Activated CD4-positive, alpha-beta T cell treated with anti-CD3 and anti-CD28 coated beads, Interleukin-2, amount 10 ng/mL, durations not matched to agents 24 days and 14 days (primary cell): ENCODE measurements at regions of chr6 and their contacts with region 1.

Region 1: GRCh38 chr6:3277851-3278416 is 19.2 kb downstream of the PSMG4 start:
- DNase-seq: no peak
- H3K4me3 Mint-ChIP-seq: no peak overlapping the region
- H3K27ac Mint-ChIP-seq: no peak overlapping the region
- H3K4me1 Mint-ChIP-seq: peaks cover 3% of the 10 kb centered on the region
- H3K27me3 Mint-ChIP-seq: no peaks in the 10 kb centered on the region

Region 2: GRCh38 chr6:3410385-3411360 is 132.7 kb after region 1 on chr6:
- intact Hi-C with region 1: loop called (anchors 5 kb)
- DNase-seq: peak; percentile 85
- H3K4me3 Mint-ChIP-seq: no peak overlapping the region
- H3K27ac Mint-ChIP-seq: no peak overlapping the region
- H3K4me1 Mint-ChIP-seq: peaks cover 5% of the 10 kb centered on the region
- H3K27me3 Mint-ChIP-seq: peaks cover 2% of the 10 kb centered on the region

Region 3: DNA sequence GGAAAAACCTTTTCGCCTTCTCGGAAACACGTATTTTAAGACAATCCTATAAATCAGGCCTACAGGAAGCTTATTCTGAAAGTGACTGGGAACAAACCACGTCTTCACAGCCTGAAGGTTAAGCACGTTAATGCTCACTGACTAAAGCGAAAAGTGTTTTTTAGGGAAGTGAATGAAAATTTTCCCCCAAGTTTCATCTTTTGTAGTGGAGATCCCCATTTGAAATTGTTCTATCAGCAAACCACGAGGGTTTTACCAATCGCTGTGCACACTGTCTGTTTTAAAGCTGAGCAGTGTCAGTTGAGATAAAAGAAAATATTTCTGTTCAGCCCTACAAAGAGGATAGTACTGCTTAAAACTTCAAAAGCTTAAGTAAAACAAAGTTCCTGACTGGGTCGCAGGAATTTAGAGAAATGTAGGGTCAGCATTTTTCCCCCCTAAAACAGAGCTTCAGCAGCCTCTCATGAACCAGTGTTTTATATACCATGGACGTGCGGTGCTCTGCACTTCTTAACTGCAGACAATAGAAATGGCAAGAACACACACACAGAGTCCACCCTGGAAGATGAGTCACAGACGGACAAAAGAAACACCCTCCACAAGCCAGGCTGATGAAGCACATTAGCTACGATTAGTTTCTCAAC is 144.0 kb after region 1 on chr6:
- intact Hi-C with region 1: no loop called
- DNase-seq: no peak
- H3K4me3 Mint-ChIP-seq: no peak overlapping the region
- H3K27ac Mint-ChIP-seq: no peak overlapping the region
- H3K4me1 Mint-ChIP-seq: no peaks in the 10 kb centered on the region
- H3K27me3 Mint-ChIP-seq: peaks cover 20% of the 10 kb centered on the region

Region 4: GRCh38 chr6:3456755-3457466 is 179.0 kb after region 1 on chr6 and contains the start of gene SLC22A23:
- intact Hi-C with region 1: loop called (anchors 5 kb)
- DNase-seq: peak; percentile 88
- H3K4me3 Mint-ChIP-seq: peak within 1 kb of the TSS; percentile 73
- H3K27ac Mint-ChIP-seq: peak within 1 kb of the TSS; percentile 38
- H3K4me1 Mint-ChIP-seq: peaks cover 5% of the 10 kb centered on the region
- H3K27me3 Mint-ChIP-seq: peaks cover 46% of the 10 kb centered on the region
- total RNA-seq, gene SLC22A23: 0.07 and 0.12 TPM in 2 replicates

Region 5: DNA sequence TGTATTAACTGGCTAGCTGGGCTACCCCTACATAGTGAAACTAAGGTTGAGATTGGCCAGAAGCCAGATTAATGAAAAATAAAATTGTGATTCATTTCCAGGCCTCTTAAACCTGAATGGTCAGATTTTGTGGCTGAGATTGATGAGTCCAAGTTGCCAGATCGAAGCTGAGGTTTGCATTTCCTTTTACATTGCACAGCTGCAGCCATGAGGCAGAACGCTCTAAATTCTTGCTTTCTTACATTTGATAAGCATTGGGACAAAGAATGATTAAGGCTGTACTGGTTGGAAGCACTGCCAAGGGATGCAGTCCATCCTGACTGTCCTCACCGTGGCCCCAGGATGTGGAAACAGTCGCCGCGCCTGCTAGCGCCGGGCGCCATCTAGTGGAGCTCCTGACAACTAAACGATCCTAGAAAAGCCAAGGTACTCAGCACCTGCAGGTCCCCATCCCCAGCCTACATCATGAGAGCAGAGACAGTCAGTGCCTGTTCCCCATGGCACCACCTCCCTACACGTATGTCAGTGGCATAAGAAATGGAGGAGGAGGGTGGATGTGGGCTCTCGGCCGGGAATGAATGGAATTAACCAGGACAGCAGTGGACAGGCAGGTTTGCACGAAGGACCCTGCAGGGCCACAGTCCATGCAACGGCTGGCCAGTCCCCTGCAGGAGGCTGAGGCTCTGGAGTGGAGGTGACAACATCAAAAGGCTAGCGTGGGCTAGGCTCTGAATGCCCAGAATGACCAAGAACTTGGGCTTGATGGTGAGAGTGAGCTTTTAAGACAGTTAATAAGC is 454.6 kb after region 1 on chr6:
- intact Hi-C with region 1: loop called (anchors 1 kb)
- DNase-seq: peak; percentile 88
- H3K4me3 Mint-ChIP-seq: no peak overlapping the region
- H3K27ac Mint-ChIP-seq: no peak overlapping the region
- H3K4me1 Mint-ChIP-seq: peaks cover 2% of the 10 kb centered on the region
- H3K27me3 Mint-ChIP-seq: peaks cover 9% of the 10 kb centered on the region